ENCODE measurements at regions of chrX and their contacts with region 1.

Region 1: GRCh38 chrX:71976753-71977152 is 66.1 kb downstream of the NHSL2 start:
- DNase-seq: no peak
- ATAC-seq: no peak
- H3K4me3 ChIP-seq: no peak overlapping the region
- H3K27ac ChIP-seq: no peak overlapping the region
- H3K4me1 ChIP-seq: no peaks in the 10 kb centered on the region
- H3K27me3 ChIP-seq: no peaks in the 10 kb centered on the region
- CTCF ChIP-seq: no peak

Region 2: GRCh38 chrX:71910643-71910985 is 66.1 kb before region 1 on chrX and contains the start of gene NHSL2:
- CTCF ChIA-PET with region 1: interaction called, 11 read pairs
- POLR2A ChIA-PET with region 1: no interaction called
- in situ Hi-C with region 1: no loop called
- intact Hi-C with region 1: no loop called
- DNase-seq: no peak
- ATAC-seq: peak; percentile 74
- H3K4me3 ChIP-seq: peak within 1 kb of the TSS; percentile 29 to 32
- H3K27ac ChIP-seq: no peak within 1 kb of the TSS
- H3K4me1 ChIP-seq: no peaks in the 10 kb centered on the region
- H3K27me3 ChIP-seq: peaks cover 7% of the 10 kb centered on the region; the same call in 1 of the 2 replicates
- CTCF ChIP-seq: no peak
- total RNA-seq, gene NHSL2: 0.36 TPM

Region 3: DNA sequence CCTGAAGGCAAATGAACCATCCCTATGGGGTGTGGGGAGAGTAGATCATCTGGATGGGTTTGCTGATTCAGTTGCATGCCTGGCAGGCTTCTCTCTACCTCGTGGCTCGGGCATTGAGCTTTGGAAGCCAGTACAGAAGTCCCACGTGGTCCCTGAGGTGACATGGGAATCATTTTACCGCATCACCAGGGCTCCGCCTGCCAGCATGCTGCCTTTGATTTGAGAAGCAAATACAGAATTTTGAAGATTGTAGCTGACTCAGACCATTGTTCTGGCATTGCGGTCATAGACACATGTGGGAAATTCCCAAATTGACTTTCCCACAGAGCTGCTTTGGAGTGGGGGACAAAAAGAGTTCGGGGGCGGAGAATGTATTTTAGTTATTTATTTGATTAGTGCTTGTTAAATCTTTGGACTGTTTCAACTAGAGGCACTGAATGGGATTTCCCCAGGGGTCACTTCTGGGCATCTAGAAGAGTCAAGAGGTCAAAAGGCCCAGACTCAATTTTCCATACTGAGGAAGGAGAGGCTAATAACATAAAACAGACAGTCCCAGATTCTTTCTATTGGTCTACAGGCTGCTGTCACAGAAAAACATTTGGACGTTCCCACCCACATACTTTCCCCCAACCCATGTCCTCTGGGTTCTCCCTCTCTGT is 13.1 kb after region 1 on chrX:
- CTCF ChIA-PET with region 1: interaction called, 3 read pairs
- POLR2A ChIA-PET with region 1: interaction called, 11 read pairs
- in situ Hi-C with region 1: no loop called
- intact Hi-C with region 1: no loop called
- DNase-seq: no peak
- ATAC-seq: no peak
- H3K4me3 ChIP-seq: no peak overlapping the region
- H3K27ac ChIP-seq: no peak overlapping the region
- H3K4me1 ChIP-seq: no peaks in the 10 kb centered on the region
- H3K27me3 ChIP-seq: no peaks in the 10 kb centered on the region
- CTCF ChIP-seq: no peak